ENCODE measurements at regions of chr12 and their contacts with region 1.

Region 1: DNA sequence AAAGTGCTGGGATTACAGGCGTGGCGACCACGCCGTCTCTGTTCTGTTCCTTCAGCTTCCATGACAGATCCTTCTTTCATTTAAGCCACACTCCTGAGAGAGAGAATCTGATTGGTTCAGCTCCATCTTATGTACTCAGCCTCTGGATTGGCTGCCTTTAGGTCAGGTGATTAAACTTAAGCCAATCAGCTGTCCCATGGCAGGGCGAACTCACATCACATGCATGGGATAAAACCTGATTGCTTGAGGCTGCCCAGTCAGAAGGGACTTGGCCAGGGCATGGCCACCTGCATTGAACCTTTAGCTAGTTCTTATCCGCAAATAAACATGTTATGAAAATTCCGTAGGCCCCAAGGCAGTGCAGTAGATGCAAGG is 274.2 kb downstream of the SUDS3 start:
- DNase-seq: no peak
- H3K4me3 ChIP-seq: no peak overlapping the region
- H3K27ac ChIP-seq: no peak overlapping the region
- H3K4me1 ChIP-seq: no peaks in the 10 kb centered on the region
- H3K27me3 ChIP-seq: no peaks in the 10 kb centered on the region
- CTCF ChIP-seq: no peak
- EP300 ChIP-seq: no peak
- POLR2A ChIP-seq: no peak

Region 2: DNA sequence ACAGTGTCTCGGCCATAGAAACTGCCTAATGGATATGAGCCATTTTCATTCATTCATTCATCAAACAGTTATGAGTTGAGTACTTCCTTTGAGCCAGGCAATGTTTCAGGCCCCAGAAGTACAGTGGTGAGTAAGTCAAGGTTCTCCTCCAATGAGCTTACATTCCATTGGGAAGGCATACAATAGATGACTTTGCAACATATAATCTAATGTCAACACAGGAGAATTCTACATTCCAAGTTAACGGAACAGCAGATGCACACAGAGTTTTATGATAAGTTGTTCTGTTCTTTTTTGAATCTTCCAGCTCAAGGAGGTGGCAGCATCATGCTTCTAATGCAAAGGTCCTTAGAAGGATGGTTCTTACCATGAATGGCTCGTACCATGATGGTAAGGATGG is 637.3 kb before region 1 on chr12:
- in situ Hi-C with region 1: no loop called
- intact Hi-C with region 1: loop called (anchors 10 kb)
- DNase-seq: no peak
- H3K4me3 ChIP-seq: no peak overlapping the region
- H3K27ac ChIP-seq: no peak overlapping the region
- H3K4me1 ChIP-seq: peaks cover 4 to 18% (median 11%) of the 10 kb centered on the region in 4 donors
- H3K27me3 ChIP-seq: no peaks in the 10 kb centered on the region
- CTCF ChIP-seq: no peak
- EP300 ChIP-seq: no peak
- POLR2A ChIP-seq: no peak

Measured in transverse colon (tissue), 4 donors.